HepG2 (cell line): ENCODE measurements at regions of chr12 and their contacts with region 1.

Region 1: GRCh38 chr12:27899151-27899661 is 73.3 kb downstream of the PTHLH start:
- DNase-seq: peak; percentile 81
- ATAC-seq: peak; percentile 84
- H3K4me3 ChIP-seq: peak overlapping the region; percentile 8 to 60 (median 20); a peak in 4 of 6 replicates
- H3K27ac ChIP-seq: peak overlapping the region; percentile 76
- H3K4me1 ChIP-seq: peaks cover 32% of the 10 kb centered on the region
- H3K27me3 ChIP-seq: no peaks in the 10 kb centered on the region
- CTCF ChIP-seq: no peak
- EP300 ChIP-seq: peak in 1 of 2 experiments; percentile 49; a peak in 1 of 4 replicates
- POLR2A ChIP-seq: 0 out of 4 replicates have a peak, but pooled peaks of 1 of the 2 experiments have one; percentile 22
- RAD21 ChIP-seq: no peak

Region 2: DNA sequence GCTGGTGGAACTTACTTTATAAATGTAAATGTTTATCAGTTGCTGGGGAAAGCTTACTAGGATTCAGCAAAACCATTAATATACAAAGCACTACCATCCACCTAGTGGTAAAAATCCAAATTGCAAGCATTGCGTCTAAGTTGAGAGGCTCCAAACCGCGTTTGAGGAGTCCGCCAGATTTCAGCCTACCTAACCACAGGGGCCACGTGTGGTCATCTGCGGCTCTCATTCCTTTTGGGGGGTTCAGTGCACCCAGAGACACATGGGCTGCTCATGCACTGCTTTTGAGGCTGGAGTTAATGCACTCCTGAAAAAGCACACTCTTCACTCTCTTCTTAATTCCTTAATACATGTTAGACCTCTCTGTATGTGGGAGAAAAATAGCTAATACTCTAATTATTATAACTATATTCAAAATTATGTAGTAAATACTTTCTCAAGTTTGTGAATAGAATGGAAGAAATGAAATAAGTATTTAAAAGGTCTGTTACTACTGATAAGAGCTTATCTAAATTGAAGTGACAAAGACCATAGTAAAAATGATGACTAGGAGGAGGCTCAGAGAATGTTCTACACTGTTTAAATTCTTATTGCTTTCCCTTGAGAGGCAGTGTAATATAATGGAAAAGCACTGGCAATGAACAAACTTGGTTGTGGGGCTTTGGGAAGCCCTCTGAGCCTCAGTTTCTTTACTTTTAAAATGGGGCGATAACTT is 77.8 kb before region 1 on chr12:
- CTCF ChIA-PET with region 1: no interaction called
- POLR2A ChIA-PET with region 1: no interaction called
- in situ Hi-C with region 1: no loop called
- intact Hi-C with region 1: loop called (anchors 2 kb)
- DNase-seq: peak; percentile 67
- ATAC-seq: peak; percentile 73
- H3K4me3 ChIP-seq: no peak overlapping the region
- H3K27ac ChIP-seq: no peak overlapping the region
- H3K4me1 ChIP-seq: peaks cover 33% of the 10 kb centered on the region
- H3K27me3 ChIP-seq: no peaks in the 10 kb centered on the region; a peak in 2 of 5 replicates
- CTCF ChIP-seq: peak; percentile 69
- EP300 ChIP-seq: no peak
- POLR2A ChIP-seq: no peak
- RAD21 ChIP-seq: no peak

Region 3: GRCh38 chr12:27840244-27840999 is 58.8 kb before region 1 on chr12:
- CTCF ChIA-PET with region 1: no interaction called
- POLR2A ChIA-PET with region 1: no interaction called
- in situ Hi-C with region 1: no loop called
- intact Hi-C with region 1: loop called (anchors 10 kb)
- DNase-seq: no peak
- ATAC-seq: no peak
- H3K4me3 ChIP-seq: no peak overlapping the region
- H3K27ac ChIP-seq: no peak overlapping the region
- H3K4me1 ChIP-seq: peaks cover 29% of the 10 kb centered on the region
- H3K27me3 ChIP-seq: no peaks in the 10 kb centered on the region; a peak in 1 of 5 replicates
- CTCF ChIP-seq: no peak
- EP300 ChIP-seq: no peak
- POLR2A ChIP-seq: no peak
- RAD21 ChIP-seq: no peak

Region 4: GRCh38 chr12:27931390-27931789 is 32.2 kb after region 1 on chr12:
- CTCF ChIA-PET with region 1: no interaction called
- POLR2A ChIA-PET with region 1: no interaction called
- in situ Hi-C with region 1: no loop called
- intact Hi-C with region 1: no loop called
- DNase-seq: no peak
- ATAC-seq: no peak
- H3K4me3 ChIP-seq: no peak overlapping the region
- H3K27ac ChIP-seq: no peak overlapping the region
- H3K4me1 ChIP-seq: peaks cover 8% of the 10 kb centered on the region; the same call in 1 of the 2 replicates
- H3K27me3 ChIP-seq: no peaks in the 10 kb centered on the region; a peak in 1 of 5 replicates
- CTCF ChIP-seq: no peak
- EP300 ChIP-seq: no peak
- POLR2A ChIP-seq: no peak
- RAD21 ChIP-seq: no peak